ENCODE measurements at regions of chr6 and their contacts with region 1.

Region 1: GRCh38 chr6:75546381-75546780 is 52.8 kb upstream of the FILIP1 start:
- DNase-seq: peak in 1 of 35 experiments; percentile 19
- ATAC-seq: no peak
- H3K4me3 ChIP-seq: no peak overlapping the region
- H3K4me3 Mint-ChIP-seq: no peak overlapping the region
- H3K27ac ChIP-seq: no peak overlapping the region
- H3K27ac Mint-ChIP-seq: no peak overlapping the region
- H3K4me1 ChIP-seq: no peaks in the 10 kb centered on the region
- H3K4me1 Mint-ChIP-seq: no peaks in the 10 kb centered on the region
- H3K27me3 ChIP-seq: peaks cover 0 to 4% of the 10 kb centered on the region in 2 experiments
- H3K27me3 Mint-ChIP-seq: peaks cover 0 to 1% of the 10 kb centered on the region in 2 donors

Region 2: GRCh38 chr6:75588947-75589346 is 42.6 kb after region 1 on chr6:
- CTCF ChIA-PET with region 1: interaction called in 1 of 2 experiments, 12 read pairs
- POLR2A ChIA-PET with region 1: no interaction called
- DNase-seq: no peak
- ATAC-seq: no peak
- H3K4me3 ChIP-seq: no peak overlapping the region
- H3K4me3 Mint-ChIP-seq: no peak overlapping the region
- H3K27ac ChIP-seq: no peak overlapping the region
- H3K27ac Mint-ChIP-seq: no peak overlapping the region
- H3K4me1 ChIP-seq: no peaks in the 10 kb centered on the region
- H3K4me1 Mint-ChIP-seq: no peaks in the 10 kb centered on the region
- H3K27me3 ChIP-seq: no peaks in the 10 kb centered on the region
- H3K27me3 Mint-ChIP-seq: peaks cover 0 to 4% of the 10 kb centered on the region in 2 donors

Region 3: GRCh38 chr6:75818098-75818855 is 271.9 kb after region 1 on chr6:
- CTCF ChIA-PET with region 1: no interaction called
- POLR2A ChIA-PET with region 1: no interaction called
- DNase-seq: no peak
- ATAC-seq: no peak
- H3K4me3 ChIP-seq: no peak overlapping the region
- H3K4me3 Mint-ChIP-seq: no peak overlapping the region
- H3K27ac ChIP-seq: no peak overlapping the region
- H3K27ac Mint-ChIP-seq: no peak overlapping the region
- H3K4me1 ChIP-seq: no peaks in the 10 kb centered on the region
- H3K4me1 Mint-ChIP-seq: no peaks in the 10 kb centered on the region
- H3K27me3 ChIP-seq: no peaks in the 10 kb centered on the region
- H3K27me3 Mint-ChIP-seq: peaks cover 3 to 9% of the 10 kb centered on the region in 2 donors